Sigmoid colon (tissue), 7 donors: ENCODE measurements at regions of chr1 and their contacts with region 1.

Region 1: DNA sequence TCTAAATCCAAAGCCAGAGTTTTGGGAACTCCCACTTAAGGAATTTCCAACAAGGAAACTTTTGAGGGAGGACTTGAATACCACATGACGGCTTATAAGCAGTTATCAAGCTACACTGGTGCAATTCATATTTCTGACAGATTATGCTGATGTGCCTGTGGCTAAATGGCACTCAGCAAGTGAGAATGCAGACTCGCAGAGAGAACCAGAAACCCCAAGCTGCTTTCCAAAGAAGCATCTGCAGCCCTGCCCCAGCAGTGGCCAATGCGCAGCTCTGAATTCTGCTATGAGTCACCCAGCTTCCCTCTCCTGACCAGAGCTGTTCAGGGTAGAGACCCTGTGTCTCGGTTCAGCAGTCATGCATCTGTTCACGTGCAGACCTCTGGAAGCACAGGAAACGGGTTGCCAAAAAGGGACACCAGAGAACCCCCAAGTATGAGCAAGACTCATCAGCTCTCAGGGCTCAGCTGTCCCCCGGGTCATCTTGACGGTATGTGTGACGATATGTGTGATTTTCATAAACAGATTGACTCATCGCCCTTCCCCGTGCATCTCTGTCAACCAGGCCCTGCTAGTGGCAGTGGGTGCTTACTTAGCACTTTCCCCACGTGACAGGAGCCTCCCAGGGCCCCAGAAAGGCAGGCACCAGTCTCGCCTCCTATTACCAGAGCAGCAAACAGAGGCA is 76.3 kb downstream of the ITPKB start:
- DNase-seq: peak; percentile 95
- H3K4me3 ChIP-seq: no peak overlapping the region
- H3K27ac ChIP-seq: no peak overlapping the region
- H3K4me1 ChIP-seq: peaks cover 0 to 11% (median 2%) of the 10 kb centered on the region in 4 donors
- H3K27me3 ChIP-seq: no peaks in the 10 kb centered on the region
- CTCF ChIP-seq: no peak
- EP300 ChIP-seq: peak in 3 of 4 donors; percentile 59 to 97 (median 76)
- POLR2A ChIP-seq: peak in 1 of 2 donors; percentile 6

Region 2: DNA sequence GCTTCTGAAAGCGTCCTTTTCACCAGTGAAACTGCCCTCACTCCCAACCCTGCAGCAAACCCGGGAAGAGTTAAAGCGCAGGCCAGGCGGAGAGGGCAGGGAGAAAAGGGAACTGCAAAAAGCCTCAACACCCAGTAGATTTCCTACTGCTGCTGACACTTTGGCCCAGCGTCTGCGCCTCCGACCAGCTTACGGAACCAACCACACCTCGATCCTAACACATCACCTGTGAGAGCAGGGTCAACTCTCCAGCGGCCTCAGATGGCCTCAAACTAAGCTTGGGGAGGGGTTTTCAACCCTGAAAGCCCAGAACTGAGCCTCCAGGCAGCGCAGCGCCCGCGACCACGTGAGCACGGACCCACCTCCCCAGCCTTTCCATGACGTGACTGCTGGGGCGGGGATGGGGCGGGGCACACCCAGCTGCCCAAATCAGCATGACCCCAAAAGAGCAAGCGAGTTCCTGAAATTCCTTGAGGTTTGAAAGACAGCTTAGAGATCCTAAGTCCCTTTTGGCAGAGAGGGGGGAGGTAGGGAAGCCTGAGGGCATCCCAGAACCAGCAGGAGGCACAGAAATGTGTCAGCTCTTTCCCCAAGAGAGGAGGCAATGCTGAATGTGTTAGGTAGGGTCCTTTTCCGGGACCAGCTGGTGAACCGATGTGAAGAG is 17.2 kb after region 1 on chr1:
- intact Hi-C with region 1: loop called (anchors 2 kb)
- DNase-seq: peak; percentile 96
- H3K4me3 ChIP-seq: peak overlapping the region; percentile 17 to 46 (median 42)
- H3K27ac ChIP-seq: peak overlapping the region in 1 of 4 donors; percentile 90
- H3K4me1 ChIP-seq: peaks cover 0 to 100% (median 74%) of the 10 kb centered on the region in 4 donors
- H3K27me3 ChIP-seq: no peaks in the 10 kb centered on the region
- CTCF ChIP-seq: no peak
- EP300 ChIP-seq: peak; percentile 33 to 98 (median 58)
- POLR2A ChIP-seq: peak; percentile 68 to 72

Region 3: DNA sequence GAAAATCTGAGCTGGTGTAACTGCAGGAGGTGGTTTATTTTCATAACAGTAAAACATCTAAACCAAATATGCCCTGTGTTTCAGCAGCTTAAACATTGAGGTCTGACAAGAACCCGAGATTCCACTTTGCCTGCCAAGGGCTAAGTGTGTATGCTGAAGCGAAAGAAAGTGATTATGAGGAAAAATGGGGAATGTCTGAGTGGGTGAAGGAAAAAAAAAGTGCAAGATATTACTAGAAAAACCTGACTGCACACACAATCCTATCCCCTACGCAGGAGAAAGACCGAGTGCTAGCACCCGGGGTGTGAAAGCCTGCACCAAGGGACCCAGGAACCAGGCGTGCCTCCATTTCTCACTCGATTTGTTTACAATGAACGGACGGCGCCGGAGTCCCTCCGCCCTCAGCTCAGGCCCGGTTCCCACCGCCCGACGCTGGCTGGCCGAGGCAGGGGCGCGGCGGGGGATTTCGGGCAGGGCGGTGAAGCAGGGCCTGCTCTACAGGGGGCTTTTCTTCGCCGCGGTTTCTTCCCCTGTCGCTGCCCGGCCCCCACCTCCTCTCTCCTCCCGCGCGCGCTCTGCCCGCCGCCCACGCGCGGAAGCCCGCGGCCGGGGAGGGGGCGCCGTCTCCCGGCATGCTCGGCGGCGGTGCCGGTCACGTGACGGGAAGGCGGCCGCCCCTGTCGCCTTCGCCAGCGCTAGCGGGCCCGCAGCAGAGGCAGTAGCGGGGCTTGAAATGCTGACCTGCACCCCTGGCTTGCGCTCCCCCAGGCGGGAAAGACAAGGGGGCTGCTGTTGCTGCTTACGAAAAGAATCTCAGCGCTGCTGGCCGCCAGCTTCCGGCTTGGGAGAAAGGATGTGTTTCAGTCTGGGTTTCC is 40.4 kb after region 1 on chr1:
- intact Hi-C with region 1: loop called (anchors 5 kb)
- DNase-seq: peak; percentile 89
- H3K4me3 ChIP-seq: peak overlapping the region; percentile 37 to 57 (median 54)
- H3K27ac ChIP-seq: peak overlapping the region in 1 of 4 donors; percentile 91
- H3K4me1 ChIP-seq: peaks cover 0 to 83% (median 81%) of the 10 kb centered on the region in 4 donors
- H3K27me3 ChIP-seq: no peaks in the 10 kb centered on the region
- CTCF ChIP-seq: no peak
- EP300 ChIP-seq: peak in 1 of 4 donors; percentile 2
- POLR2A ChIP-seq: peak; percentile 20 to 46